ENCODE measurements at regions of chr15 and their contacts with region 1.

Region 1: DNA sequence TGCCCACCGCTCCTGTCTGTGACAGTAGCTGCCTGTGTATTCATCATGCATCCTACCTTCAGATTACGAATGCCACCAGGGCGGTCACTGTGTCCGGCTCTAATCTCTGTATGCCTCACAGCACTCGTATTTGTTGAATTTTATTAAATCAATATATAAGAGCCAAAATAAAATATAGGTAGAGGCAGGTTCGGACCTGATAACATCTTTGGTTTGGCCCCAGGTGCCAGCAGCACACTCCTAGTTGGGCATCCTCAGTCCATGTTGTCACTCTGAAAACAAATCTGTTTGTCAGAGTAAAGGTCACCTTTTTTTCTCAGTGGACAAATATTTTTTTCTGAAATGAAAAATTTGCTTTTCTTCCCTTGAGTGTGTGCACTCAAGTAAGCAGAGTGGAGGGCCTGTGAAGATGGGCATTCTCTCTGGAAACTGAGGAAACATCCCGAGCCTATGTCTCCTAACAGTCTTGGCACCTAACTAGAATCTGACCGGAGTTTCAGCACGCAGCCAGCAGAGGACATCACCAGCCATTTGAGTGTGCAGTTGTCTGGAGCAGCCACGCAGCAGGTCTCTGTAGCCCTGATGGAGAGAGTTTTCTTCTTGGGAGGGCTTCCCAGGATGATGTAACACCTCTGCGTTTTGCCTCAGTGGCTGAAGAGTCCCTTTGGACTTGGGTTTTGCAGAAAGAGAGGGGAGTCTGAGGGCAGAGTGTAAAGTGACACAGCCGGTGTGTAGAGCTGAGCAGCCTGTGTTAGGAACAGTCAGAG is 51.3 kb downstream of the ABHD2 start:
- DNase-seq: no peak
- H3K4me3 ChIP-seq: no peak overlapping the region
- H3K27ac ChIP-seq: peak overlapping the region; percentile 0 to 63
- H3K4me1 ChIP-seq: peaks cover 19% of the 10 kb centered on the region
- H3K27me3 ChIP-seq: no peaks in the 10 kb centered on the region
- CTCF ChIP-seq: no peak
- POLR2A ChIP-seq: no peak

Region 2: GRCh38 chr15:89171136-89172072 is 31.8 kb after region 1 on chr15:
- intact Hi-C with region 1: loop called (anchors 5 kb)
- DNase-seq: no peak
- H3K4me3 ChIP-seq: no peak overlapping the region
- H3K27ac ChIP-seq: no peak overlapping the region
- H3K4me1 ChIP-seq: peaks cover 3% of the 10 kb centered on the region
- H3K27me3 ChIP-seq: no peaks in the 10 kb centered on the region
- CTCF ChIP-seq: peak in 3 of 4 experiments; percentile 48 to 61 (median 59)
- POLR2A ChIP-seq: no peak

Region 3: GRCh38 chr15:89206908-89207331 is 67.3 kb after region 1 on chr15:
- intact Hi-C with region 1: no loop called
- DNase-seq: peak; percentile 73
- H3K4me3 ChIP-seq: no peak overlapping the region
- H3K27ac ChIP-seq: no peak overlapping the region
- H3K4me1 ChIP-seq: peaks cover 8% of the 10 kb centered on the region
- H3K27me3 ChIP-seq: no peaks in the 10 kb centered on the region
- CTCF ChIP-seq: peak; percentile 91 to 97 (median 92)
- POLR2A ChIP-seq: no peak

Region 4: GRCh38 chr15:89321521-89322410 is 182.2 kb after region 1 on chr15:
- intact Hi-C with region 1: no loop called
- DNase-seq: no peak
- H3K4me3 ChIP-seq: no peak overlapping the region
- H3K27ac ChIP-seq: no peak overlapping the region
- H3K4me1 ChIP-seq: no peaks in the 10 kb centered on the region
- H3K27me3 ChIP-seq: no peaks in the 10 kb centered on the region
- CTCF ChIP-seq: no peak
- POLR2A ChIP-seq: no peak

Region 5: GRCh38 chr15:89642106-89642505 is 502.5 kb after region 1 on chr15:
- intact Hi-C with region 1: no loop called
- DNase-seq: no peak
- H3K4me3 ChIP-seq: no peak overlapping the region
- H3K27ac ChIP-seq: no peak overlapping the region
- H3K4me1 ChIP-seq: no peaks in the 10 kb centered on the region
- H3K27me3 ChIP-seq: no peaks in the 10 kb centered on the region
- CTCF ChIP-seq: no peak
- POLR2A ChIP-seq: no peak